CD8-positive, alpha-beta T cell (primary cell): ENCODE measurements at regions of chr19 and their contacts with region 1.

Region 1: GRCh38 chr19:46661020-46661731 is at the start of gene DACT3:
- DNase-seq: peak; percentile 99 to 100 (median 100)
- ATAC-seq: peak; percentile 89
- H3K4me3 ChIP-seq: peak within 1 kb of the TSS; percentile 54 to 62
- H3K4me3 Mint-ChIP-seq: peak within 1 kb of the TSS; percentile 82
- H3K27ac ChIP-seq: peak within 1 kb of the TSS; percentile 43 to 50
- H3K27ac Mint-ChIP-seq: peak within 1 kb of the TSS; percentile 87
- H3K4me1 ChIP-seq: peaks cover 26% of the 10 kb centered on the region
- H3K4me1 Mint-ChIP-seq: peaks cover 27% of the 10 kb centered on the region
- H3K27me3 ChIP-seq: peaks cover 7 to 21% of the 10 kb centered on the region in 2 experiments
- H3K27me3 Mint-ChIP-seq: peaks cover 17% of the 10 kb centered on the region
- CTCF ChIP-seq: no peak
- total RNA-seq, gene DACT3: not detected

Region 2: GRCh38 chr19:46529622-46530462 is 131.3 kb before region 1 on chr19:
- CTCF ChIA-PET with region 1: interaction called, 40 read pairs
- POLR2A ChIA-PET with region 1: no interaction called
- intact Hi-C with region 1: loop called (anchors 1 kb)
- DNase-seq: peak; percentile 57 to 88 (median 74)
- ATAC-seq: peak; percentile 75
- H3K4me3 ChIP-seq: no peak overlapping the region
- H3K4me3 Mint-ChIP-seq: no peak overlapping the region
- H3K27ac ChIP-seq: no peak overlapping the region
- H3K27ac Mint-ChIP-seq: no peak overlapping the region
- H3K4me1 ChIP-seq: peaks cover 4% of the 10 kb centered on the region
- H3K4me1 Mint-ChIP-seq: peaks cover 13% of the 10 kb centered on the region
- H3K27me3 ChIP-seq: peaks cover 0 to 2% of the 10 kb centered on the region in 2 experiments
- H3K27me3 Mint-ChIP-seq: no peaks in the 10 kb centered on the region
- CTCF ChIP-seq: peak; percentile 99

Region 3: DNA sequence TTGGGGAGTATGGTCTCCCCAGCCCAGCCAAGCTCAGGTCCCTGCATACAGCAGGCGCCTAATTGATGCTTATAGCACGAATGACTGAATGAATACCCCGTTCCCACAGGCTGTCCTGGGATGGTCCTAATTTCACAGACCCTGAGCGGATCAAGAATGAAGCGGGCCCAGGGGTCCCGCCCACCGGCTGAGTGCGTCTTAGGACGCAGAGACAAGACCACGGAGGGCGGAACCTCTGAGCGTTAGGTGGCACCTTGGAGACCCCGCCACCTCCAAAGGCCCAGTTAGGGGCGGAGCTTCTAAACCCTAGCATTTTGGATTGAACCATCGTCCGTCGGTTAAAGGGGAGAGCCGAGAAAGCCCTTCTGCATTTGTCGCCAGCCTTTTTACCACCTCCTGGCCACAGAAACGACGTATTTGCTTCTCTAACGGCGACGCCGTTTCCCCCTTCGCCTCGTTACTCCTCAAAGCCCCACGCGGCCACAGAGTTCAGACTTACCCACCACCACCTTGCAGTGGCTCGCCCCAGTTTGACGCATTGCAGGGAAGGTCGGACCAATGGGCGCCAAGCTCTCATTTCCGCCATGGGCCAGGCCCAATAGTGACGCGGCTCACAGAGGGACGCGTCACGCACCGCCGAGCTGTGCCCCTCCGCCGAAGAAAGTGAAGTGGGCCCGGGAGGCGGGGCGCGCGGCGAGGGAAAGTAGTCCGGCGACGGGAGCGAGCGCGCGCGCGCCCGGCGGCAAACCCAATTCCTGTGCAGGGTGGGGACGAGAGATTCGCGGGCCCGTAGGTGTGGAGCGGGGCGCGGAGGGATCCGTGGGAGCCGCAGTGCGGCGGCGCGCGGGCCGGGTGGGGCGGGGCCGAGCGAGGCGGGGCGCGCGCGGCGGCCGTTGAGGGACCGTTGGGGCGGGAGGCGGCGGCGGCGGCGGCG is 60.5 kb before region 1 on chr19:
- CTCF ChIA-PET with region 1: interaction called, 23 read pairs
- POLR2A ChIA-PET with region 1: interaction called, 18 read pairs
- intact Hi-C with region 1: loop called in 1 of 2 experiments (anchors 1 kb)
- DNase-seq: peak; percentile 95 to 99 (median 97)
- ATAC-seq: peak; percentile 89
- H3K4me3 ChIP-seq: peak overlapping the region; percentile 88 to 99
- H3K4me3 Mint-ChIP-seq: peak overlapping the region; percentile 96
- H3K27ac ChIP-seq: peak overlapping the region; percentile 100
- H3K27ac Mint-ChIP-seq: peak overlapping the region; percentile 100
- H3K4me1 ChIP-seq: peaks cover 34% of the 10 kb centered on the region
- H3K4me1 Mint-ChIP-seq: peaks cover 38% of the 10 kb centered on the region
- H3K27me3 ChIP-seq: no peaks in the 10 kb centered on the region
- H3K27me3 Mint-ChIP-seq: no peaks in the 10 kb centered on the region
- CTCF ChIP-seq: no peak

Region 4: GRCh38 chr19:46614114-46614722 is 47.0 kb before region 1 on chr19:
- CTCF ChIA-PET with region 1: interaction called, 126 read pairs
- POLR2A ChIA-PET with region 1: interaction called, 17 read pairs
- intact Hi-C with region 1: loop called (anchors 1 kb)
- DNase-seq: peak; percentile 66 to 88 (median 83)
- ATAC-seq: peak; percentile 71
- H3K4me3 ChIP-seq: peak overlapping the region in 1 of 2 experiments; percentile 20
- H3K4me3 Mint-ChIP-seq: no peak overlapping the region
- H3K27ac ChIP-seq: no peak overlapping the region
- H3K27ac Mint-ChIP-seq: peak overlapping the region; percentile 70
- H3K4me1 ChIP-seq: peaks cover 76% of the 10 kb centered on the region
- H3K4me1 Mint-ChIP-seq: peaks cover 64% of the 10 kb centered on the region
- H3K27me3 ChIP-seq: no peaks in the 10 kb centered on the region
- H3K27me3 Mint-ChIP-seq: no peaks in the 10 kb centered on the region
- CTCF ChIP-seq: peak; percentile 91

Region 5: DNA sequence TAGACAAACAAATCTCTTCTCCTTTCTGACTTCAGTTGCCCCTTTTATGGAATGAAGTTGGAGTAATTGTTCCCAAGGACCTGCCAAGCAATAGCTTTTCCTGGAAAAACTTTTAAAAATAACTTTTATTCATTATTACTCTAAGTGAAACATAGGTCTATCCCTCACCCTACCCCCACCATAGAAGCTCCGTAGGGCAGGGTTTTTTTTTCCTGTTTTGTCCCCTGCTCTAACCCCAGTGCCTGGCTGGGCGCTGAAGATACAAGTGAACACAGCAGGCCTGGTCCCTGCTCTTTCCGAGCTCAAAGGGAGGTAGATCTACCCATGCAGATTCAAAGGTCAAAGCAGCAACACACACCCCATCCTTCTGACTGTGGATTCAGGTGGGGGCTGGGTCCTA is 16.5 kb before region 1 on chr19:
- CTCF ChIA-PET with region 1: interaction called, 21 read pairs
- POLR2A ChIA-PET with region 1: interaction called, 4 read pairs
- intact Hi-C with region 1: no loop called
- DNase-seq: no peak
- ATAC-seq: no peak
- H3K4me3 ChIP-seq: no peak overlapping the region
- H3K4me3 Mint-ChIP-seq: no peak overlapping the region
- H3K27ac ChIP-seq: no peak overlapping the region
- H3K27ac Mint-ChIP-seq: no peak overlapping the region
- H3K4me1 ChIP-seq: peaks cover 12% of the 10 kb centered on the region
- H3K4me1 Mint-ChIP-seq: peaks cover 9% of the 10 kb centered on the region
- H3K27me3 ChIP-seq: peaks cover 0 to 10% of the 10 kb centered on the region in 2 experiments
- H3K27me3 Mint-ChIP-seq: peaks cover 30% of the 10 kb centered on the region
- CTCF ChIP-seq: no peak

Region 6: GRCh38 chr19:46717034-46717723 is 56.0 kb after region 1 on chr19 and contains the start of gene PRKD2:
- CTCF ChIA-PET with region 1: interaction called, 13 read pairs
- POLR2A ChIA-PET with region 1: interaction called, 6 read pairs
- intact Hi-C with region 1: loop called (anchors 1 to 2 kb)
- DNase-seq: peak; percentile 60 to 91 (median 86)
- ATAC-seq: peak; percentile 51
- H3K4me3 ChIP-seq: peak within 1 kb of the TSS; percentile 71 to 73
- H3K4me3 Mint-ChIP-seq: peak within 1 kb of the TSS; percentile 92
- H3K27ac ChIP-seq: peak within 1 kb of the TSS; percentile 77 to 94
- H3K27ac Mint-ChIP-seq: peak within 1 kb of the TSS; percentile 99
- H3K4me1 ChIP-seq: peaks cover 37% of the 10 kb centered on the region
- H3K4me1 Mint-ChIP-seq: peaks cover 45% of the 10 kb centered on the region
- H3K27me3 ChIP-seq: no peaks in the 10 kb centered on the region
- H3K27me3 Mint-ChIP-seq: no peaks in the 10 kb centered on the region
- CTCF ChIP-seq: no peak
- total RNA-seq, gene PRKD2: 81.1 to 89.7 TPM

Region 7: DNA sequence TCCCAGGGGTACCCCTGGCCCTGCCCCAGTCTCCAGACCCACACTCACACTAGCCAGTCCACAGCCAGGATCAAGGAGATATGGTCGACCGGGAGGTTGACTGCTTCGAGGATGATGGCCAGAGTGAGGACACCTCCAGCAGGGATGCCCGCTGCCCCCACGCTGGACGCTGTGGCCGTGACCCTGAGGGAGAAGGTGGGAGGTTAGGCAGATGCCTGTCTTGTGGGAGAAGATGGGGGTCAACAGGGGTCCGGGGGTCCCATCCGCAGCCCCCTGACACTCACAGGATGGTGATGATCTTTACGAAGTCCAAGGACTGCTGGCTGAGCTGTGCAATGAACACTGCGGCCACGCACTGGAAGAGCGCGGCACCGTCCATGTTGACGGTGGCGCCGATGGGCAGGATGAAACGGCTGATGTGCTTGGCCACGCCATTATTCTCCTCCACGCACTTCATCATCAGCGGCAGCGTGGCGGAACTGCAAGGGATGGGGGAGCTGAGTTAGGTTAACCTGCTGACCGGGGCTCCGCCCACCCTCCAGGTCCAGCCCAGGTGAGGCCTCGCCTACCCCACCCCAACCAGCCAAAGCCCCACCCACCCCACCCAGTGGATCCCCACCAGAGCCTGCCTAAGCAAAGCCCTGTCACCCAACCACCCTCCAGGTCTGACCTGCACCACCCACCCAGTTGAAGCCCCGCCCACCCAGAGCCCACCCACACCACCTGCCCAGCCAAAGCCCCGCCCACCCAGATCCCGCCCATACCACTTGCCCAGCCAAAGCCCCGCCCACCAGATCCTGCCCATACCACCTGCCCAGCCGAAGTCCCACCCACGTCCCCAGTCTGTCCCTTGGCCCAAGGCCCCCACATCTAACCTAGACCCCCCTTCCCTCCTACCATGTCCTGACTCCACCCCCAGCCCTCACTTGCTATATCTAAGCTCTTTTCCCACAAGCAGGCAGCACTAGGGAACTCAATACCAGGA is 116.0 kb after region 1 on chr19:
- CTCF ChIA-PET with region 1: no interaction called
- POLR2A ChIA-PET with region 1: no interaction called
- intact Hi-C with region 1: no loop called
- DNase-seq: peak in 2 of 9 experiments; percentile 27 to 42
- ATAC-seq: no peak
- H3K4me3 ChIP-seq: no peak overlapping the region
- H3K4me3 Mint-ChIP-seq: no peak overlapping the region
- H3K27ac ChIP-seq: no peak overlapping the region
- H3K27ac Mint-ChIP-seq: no peak overlapping the region
- H3K4me1 ChIP-seq: no peaks in the 10 kb centered on the region
- H3K4me1 Mint-ChIP-seq: no peaks in the 10 kb centered on the region
- H3K27me3 ChIP-seq: no peaks in the 10 kb centered on the region
- H3K27me3 Mint-ChIP-seq: no peaks in the 10 kb centered on the region
- CTCF ChIP-seq: no peak

Region 8: GRCh38 chr19:46797881-46798280 is 136.7 kb after region 1 on chr19:
- CTCF ChIA-PET with region 1: no interaction called
- POLR2A ChIA-PET with region 1: no interaction called
- intact Hi-C with region 1: no loop called
- DNase-seq: no peak
- ATAC-seq: no peak
- H3K4me3 ChIP-seq: no peak overlapping the region
- H3K4me3 Mint-ChIP-seq: no peak overlapping the region
- H3K27ac ChIP-seq: no peak overlapping the region
- H3K27ac Mint-ChIP-seq: no peak overlapping the region
- H3K4me1 ChIP-seq: no peaks in the 10 kb centered on the region
- H3K4me1 Mint-ChIP-seq: no peaks in the 10 kb centered on the region
- H3K27me3 ChIP-seq: no peaks in the 10 kb centered on the region
- H3K27me3 Mint-ChIP-seq: no peaks in the 10 kb centered on the region
- CTCF ChIP-seq: no peak